ENCODE measurements at regions of chr11 and their contacts with region 1.

Region 1: GRCh38 chr11:43282607-43283440 is 29.0 kb upstream of the API5 start:
- ATAC-seq: peak; percentile 38 to 74 (median 56)
- H3K4me3 ChIP-seq: no peak overlapping the region
- H3K27ac ChIP-seq: no peak overlapping the region
- H3K4me1 ChIP-seq: no peaks in the 10 kb centered on the region

Region 2: GRCh38 chr11:41461057-41461681 is 1821.7 kb before region 1 on chr11:
- in situ Hi-C with region 1: loop called in 2 of 9 experiments (anchors 25 kb)
- ATAC-seq: no peak
- H3K4me3 ChIP-seq: no peak overlapping the region
- H3K27ac ChIP-seq: no peak overlapping the region
- H3K4me1 ChIP-seq: peaks cover 6 to 20% of the 10 kb centered on the region in 2 donors

Region 3: DNA sequence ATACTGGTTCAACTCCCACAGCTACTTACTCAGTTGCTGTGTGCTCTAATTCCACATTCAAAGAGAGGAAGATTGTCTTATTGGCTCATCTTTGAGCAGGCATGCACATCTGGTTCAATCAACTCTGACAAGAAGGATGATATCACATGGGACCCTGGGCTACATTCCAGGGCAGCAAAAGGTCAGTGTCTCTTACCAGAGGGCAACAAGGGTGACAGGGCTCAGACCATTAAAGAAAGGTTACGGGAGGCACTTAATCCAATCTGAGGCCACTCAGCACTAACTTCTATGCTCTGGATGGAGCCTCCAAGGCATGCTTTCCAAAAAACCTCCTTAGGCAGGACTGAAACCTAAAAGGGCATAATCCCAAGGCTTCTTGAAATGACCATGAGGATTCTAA is 520.5 kb before region 1 on chr11:
- in situ Hi-C with region 1: loop called in 2 of 9 experiments (anchors 10 to 25 kb)
- ATAC-seq: no peak
- H3K4me3 ChIP-seq: no peak overlapping the region
- H3K27ac ChIP-seq: no peak overlapping the region
- H3K4me1 ChIP-seq: peaks cover 4 to 5% of the 10 kb centered on the region in 2 donors

Region 4: GRCh38 chr11:42770444-42771065 is 512.3 kb before region 1 on chr11:
- in situ Hi-C with region 1: loop called in 3 of 9 experiments (anchors 10 to 25 kb)
- ATAC-seq: peak in 3 of 8 experiments; percentile 75 to 82 (median 80)
- H3K4me3 ChIP-seq: no peak overlapping the region
- H3K27ac ChIP-seq: no peak overlapping the region
- H3K4me1 ChIP-seq: peaks cover 11 to 25% of the 10 kb centered on the region in 2 donors

Measured in motor neuron (in vitro differentiated cells).